ENCODE measurements at regions of chr13 and their contacts with region 1.

Region 1: GRCh38 chr13:99263126-99263785 is 5.1 kb upstream of the GPR18 start:
- DNase-seq: no peak
- H3K4me3 ChIP-seq: no peak overlapping the region
- H3K27ac ChIP-seq: no peak overlapping the region
- H3K4me1 ChIP-seq: no peaks in the 10 kb centered on the region
- H3K27me3 ChIP-seq: no peaks in the 10 kb centered on the region
- CTCF ChIP-seq: no peak
- POLR2A ChIP-seq: no peak

Region 2: GRCh38 chr13:99103536-99103935 is 159.7 kb before region 1 on chr13:
- intact Hi-C with region 1: no loop called
- DNase-seq: no peak
- H3K4me3 ChIP-seq: no peak overlapping the region
- H3K27ac ChIP-seq: no peak overlapping the region
- H3K4me1 ChIP-seq: no peaks in the 10 kb centered on the region
- H3K27me3 ChIP-seq: no peaks in the 10 kb centered on the region
- CTCF ChIP-seq: no peak
- POLR2A ChIP-seq: no peak

Region 3: DNA sequence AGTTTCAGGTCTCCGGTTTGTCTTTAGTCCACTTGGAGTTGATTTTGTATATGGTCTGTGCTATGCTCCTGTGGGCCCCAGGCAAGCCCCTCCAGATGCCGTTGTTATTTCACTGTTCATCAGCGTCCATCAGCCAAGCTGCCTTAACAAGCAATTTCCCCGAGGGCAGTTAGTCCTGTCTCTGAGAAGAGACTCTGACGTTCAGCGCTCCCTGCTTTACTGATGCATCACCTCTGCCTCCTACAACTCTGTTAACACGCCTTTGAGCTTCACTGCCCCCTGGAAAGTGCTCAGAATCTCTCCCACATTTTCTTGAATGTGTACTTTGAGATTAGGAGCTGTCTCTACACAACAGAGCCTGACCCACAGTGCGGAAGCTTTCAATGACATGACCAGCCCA is 104.4 kb before region 1 on chr13:
- intact Hi-C with region 1: no loop called
- DNase-seq: no peak
- H3K4me3 ChIP-seq: no peak overlapping the region
- H3K27ac ChIP-seq: no peak overlapping the region
- H3K4me1 ChIP-seq: no peaks in the 10 kb centered on the region
- H3K27me3 ChIP-seq: no peaks in the 10 kb centered on the region
- CTCF ChIP-seq: no peak
- POLR2A ChIP-seq: no peak

Region 4: DNA sequence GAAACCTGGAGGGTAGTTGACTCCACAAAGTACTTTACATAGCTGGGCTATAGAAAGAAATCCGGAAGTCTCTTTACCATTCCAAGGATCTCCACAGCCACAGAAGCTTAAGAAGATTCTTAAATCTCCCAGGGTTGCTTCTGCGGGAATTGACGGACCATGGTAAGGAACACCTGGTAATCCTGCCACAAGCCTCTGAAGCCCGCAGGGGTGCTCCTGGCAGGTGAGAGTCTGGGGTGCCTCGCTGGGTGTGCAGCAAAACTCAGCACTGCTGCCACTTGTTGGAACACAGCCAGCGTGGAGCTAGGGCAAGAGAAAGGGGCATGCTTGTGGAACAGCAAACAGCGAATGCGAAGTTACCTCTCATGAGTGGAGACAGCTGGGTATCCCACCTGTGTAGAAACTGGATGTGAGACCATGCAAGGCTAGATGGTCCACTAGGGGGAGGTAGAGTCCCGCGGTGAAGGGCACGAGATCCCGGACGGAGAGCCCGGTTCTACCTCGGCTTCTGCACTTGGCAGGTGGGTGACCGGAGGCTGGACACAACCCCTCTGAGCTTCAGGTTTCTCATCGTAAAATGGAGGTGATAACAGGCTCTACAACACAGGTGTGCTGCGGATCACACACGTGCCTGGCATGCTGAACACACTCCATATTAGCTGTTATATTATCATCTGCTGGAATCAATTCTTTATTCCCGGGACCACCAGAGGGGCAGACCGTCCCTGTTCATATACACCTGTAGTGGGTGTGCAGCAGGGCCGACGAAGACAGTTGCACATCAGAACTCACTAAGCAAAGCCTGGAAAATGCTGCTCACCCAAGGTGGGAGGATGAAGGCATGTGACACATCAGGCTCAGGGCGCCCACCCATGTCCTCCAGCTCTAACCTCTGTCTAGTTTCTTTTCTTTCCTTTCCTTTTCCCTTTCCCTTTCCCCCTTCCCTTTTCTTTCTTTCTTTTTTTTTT is 86.7 kb before region 1 on chr13:
- intact Hi-C with region 1: loop called (anchors 2 kb)
- DNase-seq: peak; percentile 75 to 83
- H3K4me3 ChIP-seq: no peak overlapping the region
- H3K27ac ChIP-seq: no peak overlapping the region
- H3K4me1 ChIP-seq: no peaks in the 10 kb centered on the region
- H3K27me3 ChIP-seq: no peaks in the 10 kb centered on the region
- CTCF ChIP-seq: peak; percentile 82 to 92 (median 90)
- POLR2A ChIP-seq: no peak